A549 (cell line): ENCODE measurements at regions of chr1 and their contacts with region 1.

Region 1: DNA sequence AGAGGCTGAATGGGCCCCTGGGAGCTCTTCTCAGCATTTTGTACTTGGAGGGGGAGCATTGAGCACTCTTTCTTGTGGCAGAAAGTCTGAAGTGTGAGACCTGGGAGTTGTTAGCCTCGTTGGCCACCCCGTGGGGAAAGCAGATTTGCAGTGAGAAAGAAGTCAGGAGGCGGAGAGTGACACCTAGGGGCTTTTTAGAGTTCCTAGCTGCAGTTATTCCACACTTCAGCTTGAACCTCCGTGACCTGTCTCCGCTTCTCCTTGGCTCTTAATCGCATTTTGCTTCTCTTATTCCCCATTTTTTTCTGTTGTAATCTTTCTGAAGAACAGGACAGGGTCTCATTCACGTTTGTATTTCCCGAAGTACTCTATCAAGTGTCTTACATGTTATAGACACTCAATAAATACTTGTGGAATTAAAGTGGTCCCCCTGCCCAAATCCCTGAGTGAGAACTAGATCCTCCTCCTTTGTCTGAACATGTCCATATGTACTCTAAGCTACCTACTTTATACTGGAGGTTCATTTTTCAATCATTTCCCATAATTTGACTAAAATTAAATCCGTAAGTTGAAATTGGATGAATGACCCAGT is 14.5 kb upstream of the C1orf141 start:
- DNase-seq: peak; percentile 18 to 69
- ATAC-seq: peak; percentile 99
- H3K4me3 ChIP-seq: no peak overlapping the region
- H3K27ac ChIP-seq: no peak overlapping the region
- H3K4me1 ChIP-seq: 0 out of 3 replicates have a peak, but pooled peaks cover 3% of the 10 kb centered on the region
- CTCF ChIP-seq: peak; percentile 77
- EP300 ChIP-seq: no peak
- POLR2A ChIP-seq: no peak
- RAD21 ChIP-seq: peak; percentile 79 to 81

Region 2: DNA sequence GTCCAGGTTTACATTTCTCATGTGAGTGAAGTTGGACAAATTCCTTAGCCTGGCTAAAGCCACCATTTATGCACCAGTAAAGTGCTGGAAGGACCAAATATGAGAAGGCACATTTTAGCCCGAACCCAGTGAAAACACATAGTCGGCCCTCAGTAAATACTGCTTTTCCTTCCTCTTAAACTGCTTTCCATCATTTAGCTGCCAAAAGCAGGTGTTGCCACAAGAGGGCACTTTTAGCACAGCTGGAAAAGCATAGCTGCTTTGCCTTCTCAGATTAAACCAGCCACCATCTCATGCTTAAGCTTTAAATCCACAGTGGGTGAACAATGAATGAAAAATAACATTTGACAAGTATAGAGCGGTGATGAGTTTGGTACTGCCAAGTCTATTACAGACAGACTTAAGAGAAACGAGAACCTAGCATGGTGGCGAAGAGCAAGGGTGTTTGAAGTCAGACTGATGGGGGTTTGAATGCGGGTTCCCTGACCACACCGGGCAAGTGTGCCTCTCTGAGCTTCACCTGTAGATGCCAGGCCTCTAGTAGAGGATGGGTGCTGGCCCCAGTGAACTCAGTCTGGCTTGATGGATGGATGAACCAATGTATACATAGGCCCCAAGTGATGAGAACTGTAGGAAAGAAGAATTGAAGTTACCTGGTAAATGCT is 153.1 kb before region 1 on chr1:
- CTCF ChIA-PET with region 1: interaction called, 123 read pairs
- POLR2A ChIA-PET with region 1: interaction called, 3 read pairs
- DNase-seq: peak; percentile 16 to 69
- ATAC-seq: peak; percentile 71 to 89
- H3K4me3 ChIP-seq: no peak overlapping the region
- H3K27ac ChIP-seq: no peak overlapping the region
- H3K4me1 ChIP-seq: no peaks in the 10 kb centered on the region
- CTCF ChIP-seq: peak; percentile 78
- EP300 ChIP-seq: no peak
- POLR2A ChIP-seq: no peak
- RAD21 ChIP-seq: peak; percentile 76 to 83

Region 3: DNA sequence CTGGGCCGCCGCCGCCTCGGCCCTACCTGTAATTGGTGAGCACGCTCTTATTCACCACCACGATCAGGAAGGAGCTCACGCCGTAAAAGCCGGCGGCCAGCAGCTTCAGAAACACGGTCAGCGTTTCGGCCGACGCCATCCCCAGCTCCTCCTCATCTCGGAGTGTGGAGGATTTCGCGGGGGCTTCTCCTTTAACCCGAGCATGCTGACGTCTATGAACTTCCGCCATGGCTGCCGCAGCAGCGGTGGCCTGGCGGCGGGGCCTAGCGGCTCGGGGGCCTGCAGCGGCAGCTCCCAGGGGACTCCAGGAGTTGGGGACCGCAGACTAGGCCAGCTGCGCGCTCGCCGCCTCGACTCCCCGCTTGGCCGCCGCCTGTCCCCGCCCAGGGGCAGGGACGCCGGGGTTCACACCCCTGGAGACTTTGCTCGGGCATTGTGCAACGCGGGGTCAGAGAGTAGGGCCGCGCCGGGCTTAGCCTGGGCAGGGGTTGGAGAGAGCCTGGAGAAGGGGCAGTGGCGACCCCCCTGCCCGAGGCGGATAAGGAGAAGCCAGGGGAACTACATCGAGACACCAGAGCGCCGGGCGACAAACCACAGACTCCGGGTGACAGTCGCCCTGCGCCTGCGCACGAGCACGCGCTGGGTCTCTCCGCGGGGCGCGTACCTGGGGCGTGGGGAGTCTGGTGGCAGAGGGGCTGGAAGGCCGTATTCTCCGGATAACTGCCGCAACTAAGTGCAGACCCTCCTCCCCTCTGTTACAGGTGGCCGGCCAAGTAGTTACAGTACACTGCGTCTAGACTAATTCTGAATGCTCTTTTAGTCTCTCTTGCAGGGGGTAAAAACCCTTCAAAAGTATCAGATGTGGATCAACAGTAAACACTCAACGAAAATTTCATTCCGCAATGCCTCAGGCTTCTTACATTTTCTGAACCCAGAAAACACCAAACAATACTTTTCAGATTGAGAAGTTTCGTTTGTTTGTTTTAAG is 95.2 kb before region 1 on chr1 and contains the start of gene SLC35D1:
- CTCF ChIA-PET with region 1: interaction called, 14 read pairs
- POLR2A ChIA-PET with region 1: no interaction called
- DNase-seq: peak; percentile 54 to 69
- ATAC-seq: peak; percentile 84 to 90
- H3K4me3 ChIP-seq: peak within 1 kb of the TSS; percentile 87
- H3K27ac ChIP-seq: peak within 1 kb of the TSS; percentile 86 to 97
- H3K4me1 ChIP-seq: peaks cover 14% of the 10 kb centered on the region
- CTCF ChIP-seq: no peak
- EP300 ChIP-seq: no peak
- POLR2A ChIP-seq: peak; percentile 6
- RAD21 ChIP-seq: no peak
- polyA plus RNA-seq, gene SLC35D1: 11.7 and 12.9 TPM in 2 replicates

Region 4: GRCh38 chr1:67166196-67166595 is 16.9 kb after region 1 on chr1 and contains the start of gene IL23R:
- CTCF ChIA-PET with region 1: interaction called, 15 read pairs
- POLR2A ChIA-PET with region 1: no interaction called
- DNase-seq: no peak
- ATAC-seq: no peak
- H3K4me3 ChIP-seq: no peak within 1 kb of the TSS
- H3K27ac ChIP-seq: no peak within 1 kb of the TSS
- H3K4me1 ChIP-seq: peaks cover 4% of the 10 kb centered on the region; the same call in 1 of the 3 replicates
- CTCF ChIP-seq: no peak
- EP300 ChIP-seq: no peak
- POLR2A ChIP-seq: no peak
- RAD21 ChIP-seq: no peak
- polyA plus RNA-seq, gene IL23R: not detected in 2 replicates